PC-3 (cell line): ENCODE measurements at regions of chr3 and their contacts with region 1.

Region 1: DNA sequence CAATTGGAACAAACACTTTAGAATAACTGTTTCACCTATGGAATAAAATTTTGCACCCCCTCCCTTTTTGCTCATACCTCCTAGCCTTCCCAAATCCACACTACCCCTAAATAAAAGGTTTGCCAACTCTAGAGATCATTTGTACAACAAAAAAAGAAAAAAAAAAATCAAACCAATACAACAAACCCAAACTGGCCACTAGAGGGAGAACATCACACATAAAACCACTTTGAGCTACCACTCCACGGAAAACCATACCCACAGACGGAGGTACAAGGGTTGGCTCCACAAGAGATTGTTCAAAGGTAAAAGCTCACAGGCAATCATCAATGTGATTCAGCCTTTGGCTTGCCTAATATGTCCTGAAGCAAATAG is 47.6 kb downstream of the SETMAR start:
- DNase-seq: peak; percentile 76
- ATAC-seq: peak; percentile 78
- H3K4me3 ChIP-seq: no peak overlapping the region
- H3K27ac ChIP-seq: no peak overlapping the region
- H3K4me1 ChIP-seq: peaks cover 10% of the 10 kb centered on the region
- H3K27me3 ChIP-seq: no peaks in the 10 kb centered on the region
- CTCF ChIP-seq: peak; percentile 93

Region 2: DNA sequence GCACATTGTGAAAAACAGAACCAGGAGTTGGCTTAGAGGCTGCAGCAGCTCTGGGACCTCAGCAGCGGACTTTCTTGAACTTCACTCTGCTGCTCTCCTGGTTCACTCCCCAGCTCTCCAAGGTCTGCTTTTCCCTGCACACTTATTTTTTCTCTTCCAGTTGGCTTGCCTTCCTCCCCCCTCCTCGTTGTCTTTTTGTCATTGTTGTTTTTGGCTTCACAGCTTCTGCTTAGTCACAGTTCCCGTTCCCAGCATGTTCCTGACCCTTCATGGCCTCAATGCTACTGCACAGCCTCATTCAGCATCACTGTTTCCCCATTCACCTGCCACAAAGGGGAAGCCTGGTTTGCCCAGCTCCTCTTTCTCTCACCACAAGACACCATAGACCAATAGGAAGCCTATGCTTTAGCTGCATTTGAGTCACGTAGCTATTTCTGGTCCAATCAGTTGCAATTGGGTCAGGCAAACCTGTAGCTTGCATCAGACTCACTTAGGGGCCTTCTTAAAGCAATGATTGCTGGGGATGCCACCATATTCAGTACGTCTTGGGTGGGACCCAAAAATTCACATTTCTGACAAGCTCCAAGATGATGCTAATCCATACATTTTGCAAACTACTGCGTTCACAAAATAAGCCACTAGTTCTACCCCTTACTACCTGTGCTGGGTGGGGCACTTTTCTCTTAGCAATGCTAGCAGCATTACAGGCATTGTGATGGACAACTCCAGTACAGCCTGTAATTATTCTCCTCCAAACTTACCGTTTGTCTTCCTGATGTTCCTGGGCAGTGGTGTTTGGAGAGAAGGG is 124.1 kb after region 1 on chr3:
- CTCF ChIA-PET with region 1: interaction called, 4 read pairs
- POLR2A ChIA-PET with region 1: no interaction called
- intact Hi-C with region 1: loop called (anchors 5 kb)
- DNase-seq: peak; percentile 88
- ATAC-seq: peak; percentile 86
- H3K4me3 ChIP-seq: no peak overlapping the region
- H3K27ac ChIP-seq: peak overlapping the region; percentile 60
- H3K4me1 ChIP-seq: peaks cover 26% of the 10 kb centered on the region
- H3K27me3 ChIP-seq: no peaks in the 10 kb centered on the region
- CTCF ChIP-seq: no peak